Activated naive CD4-positive, alpha-beta T cell treated with anti-CD3 and anti-CD28 coated beads for 36 hours (primary cell): ENCODE measurements at regions of chr10 and their contacts with region 1.

Region 1: DNA sequence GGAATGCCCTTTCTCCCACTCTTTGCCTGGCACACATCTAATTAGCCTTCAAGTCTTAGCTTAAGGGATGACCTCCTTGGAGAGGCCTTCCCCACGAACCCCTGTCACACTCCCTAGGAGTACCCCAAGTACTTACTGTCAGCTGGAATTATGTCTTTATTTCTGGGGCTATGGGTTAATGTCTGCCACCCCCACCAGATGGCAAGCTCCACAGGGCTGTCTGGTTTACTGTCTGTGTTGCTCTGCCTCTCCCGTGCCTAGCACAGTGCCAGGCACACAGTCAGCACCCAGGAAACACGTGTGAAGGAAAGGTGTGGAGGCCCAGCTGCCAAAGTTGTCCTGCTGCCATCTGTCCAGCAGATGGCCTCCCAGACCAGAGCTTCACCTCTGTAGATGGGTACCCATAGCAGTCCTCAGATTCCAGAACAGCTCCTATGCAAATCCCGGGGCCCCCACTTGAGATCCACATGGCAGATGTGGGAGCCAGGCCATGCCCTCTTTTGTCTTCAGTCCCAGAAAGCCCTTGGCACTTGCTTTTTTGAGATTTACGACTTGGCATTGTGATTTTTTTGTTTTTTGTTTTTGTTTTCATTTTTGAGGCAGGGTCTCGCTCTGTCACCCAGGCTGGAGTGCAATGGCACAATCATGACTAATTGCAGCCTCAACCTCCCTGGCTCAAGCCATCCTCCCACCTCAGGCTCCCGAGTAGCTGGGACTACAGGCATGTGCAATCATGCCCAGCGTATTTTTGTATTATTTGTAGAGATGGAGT is 17.2 kb upstream of the PALD1 start:
- DNase-seq: peak; percentile 72
- H3K4me3 Mint-ChIP-seq: no peak overlapping the region
- H3K27ac Mint-ChIP-seq: no peak overlapping the region
- H3K4me1 Mint-ChIP-seq: peaks cover 5% of the 10 kb centered on the region
- H3K27me3 Mint-ChIP-seq: peaks cover 33% of the 10 kb centered on the region

Region 2: DNA sequence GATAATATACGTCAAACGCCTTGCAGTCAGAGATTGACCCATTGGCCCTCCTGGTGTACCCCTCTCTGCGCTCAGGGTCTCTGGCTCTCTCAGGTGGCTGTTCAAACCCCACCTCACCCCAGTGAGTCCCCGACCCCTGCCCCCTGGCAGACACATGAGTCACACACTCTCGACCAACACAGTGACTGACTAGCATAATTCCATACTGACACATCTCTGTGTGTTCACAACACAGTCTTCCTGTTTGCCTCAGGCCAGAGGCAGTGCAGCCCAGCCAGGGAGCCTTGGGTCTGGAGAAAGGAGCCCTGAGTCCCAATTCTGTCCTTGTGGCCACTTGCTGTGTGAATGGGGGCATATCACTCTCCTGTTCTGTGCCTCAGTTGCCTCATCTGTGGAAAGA is 57.3 kb after region 1 on chr10:
- CTCF ChIA-PET with region 1: interaction called, 12 read pairs
- intact Hi-C with region 1: no loop called
- DNase-seq: no peak
- H3K4me3 Mint-ChIP-seq: no peak overlapping the region
- H3K27ac Mint-ChIP-seq: no peak overlapping the region
- H3K4me1 Mint-ChIP-seq: peaks cover 2% of the 10 kb centered on the region
- H3K27me3 Mint-ChIP-seq: no peaks in the 10 kb centered on the region

Region 3: DNA sequence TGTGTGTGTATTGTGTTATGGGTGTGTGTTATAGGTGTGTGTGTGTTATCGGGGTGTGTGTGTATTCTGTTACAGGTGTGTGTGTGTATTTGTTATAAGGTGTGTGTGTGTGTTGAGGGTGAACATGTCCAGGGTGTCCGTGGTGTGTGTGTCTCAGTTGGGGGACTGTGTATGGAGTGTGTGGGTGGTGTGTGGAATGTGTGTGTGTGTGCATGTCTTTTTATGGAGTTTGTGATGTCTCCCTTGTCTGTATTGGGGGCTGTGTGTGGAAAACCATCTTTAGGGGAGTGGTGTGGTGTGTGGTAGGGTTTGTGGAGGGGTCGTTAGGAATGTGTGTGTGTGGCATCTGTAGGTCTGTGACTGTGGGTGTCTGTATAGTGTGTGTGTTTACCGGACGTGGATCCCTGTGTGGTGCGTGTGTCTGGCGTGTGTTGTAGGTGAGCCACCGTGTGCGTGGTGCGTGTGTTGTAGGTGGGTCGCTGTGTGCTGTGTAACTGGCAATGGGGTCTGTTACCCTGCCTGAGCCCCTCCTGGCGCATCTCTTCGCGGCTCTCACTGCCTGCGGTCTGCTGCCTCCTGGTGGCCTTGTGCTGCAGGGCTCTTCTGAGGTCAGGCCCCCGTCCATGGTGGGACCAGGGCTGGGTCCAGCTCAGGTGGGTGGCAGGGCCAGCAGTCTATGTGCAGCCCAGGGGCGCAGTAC is 78.8 kb after region 1 on chr10:
- CTCF ChIA-PET with region 1: interaction called, 59 read pairs
- intact Hi-C with region 1: loop called (anchors 1 kb)
- DNase-seq: peak; percentile 27
- H3K4me3 Mint-ChIP-seq: no peak overlapping the region
- H3K27ac Mint-ChIP-seq: no peak overlapping the region
- H3K4me1 Mint-ChIP-seq: no peaks in the 10 kb centered on the region
- H3K27me3 Mint-ChIP-seq: no peaks in the 10 kb centered on the region

Region 4: GRCh38 chr10:70726909-70727495 is 265.6 kb after region 1 on chr10:
- CTCF ChIA-PET with region 1: no interaction called
- intact Hi-C with region 1: no loop called
- DNase-seq: no peak
- H3K4me3 Mint-ChIP-seq: no peak overlapping the region
- H3K27ac Mint-ChIP-seq: no peak overlapping the region
- H3K4me1 Mint-ChIP-seq: no peaks in the 10 kb centered on the region
- H3K27me3 Mint-ChIP-seq: no peaks in the 10 kb centered on the region

Region 5: GRCh38 chr10:70758757-70759514 is 297.5 kb after region 1 on chr10:
- CTCF ChIA-PET with region 1: interaction called, 12 read pairs
- intact Hi-C with region 1: loop called (anchors 1 kb)
- DNase-seq: peak; percentile 84
- H3K4me3 Mint-ChIP-seq: no peak overlapping the region
- H3K27ac Mint-ChIP-seq: no peak overlapping the region
- H3K4me1 Mint-ChIP-seq: peaks cover 7% of the 10 kb centered on the region
- H3K27me3 Mint-ChIP-seq: no peaks in the 10 kb centered on the region